Ovary (tissue), 10 donors: ENCODE measurements at regions of chr6 and their contacts with region 1.

Region 1: GRCh38 chr6:45714741-45715507 is 300.7 kb downstream of the CLIC5 start:
- DNase-seq: peak in 4 of 5 donors; percentile 31 to 54 (median 36)
- H3K4me3 ChIP-seq: no peak overlapping the region
- H3K27ac ChIP-seq: no peak overlapping the region
- H3K4me1 ChIP-seq: no peaks in the 10 kb centered on the region
- H3K27me3 ChIP-seq: no peaks in the 10 kb centered on the region
- CTCF ChIP-seq: peak; percentile 50 to 75 (median 67)
- EP300 ChIP-seq: no peak
- POLR2A ChIP-seq: no peak

Region 2: DNA sequence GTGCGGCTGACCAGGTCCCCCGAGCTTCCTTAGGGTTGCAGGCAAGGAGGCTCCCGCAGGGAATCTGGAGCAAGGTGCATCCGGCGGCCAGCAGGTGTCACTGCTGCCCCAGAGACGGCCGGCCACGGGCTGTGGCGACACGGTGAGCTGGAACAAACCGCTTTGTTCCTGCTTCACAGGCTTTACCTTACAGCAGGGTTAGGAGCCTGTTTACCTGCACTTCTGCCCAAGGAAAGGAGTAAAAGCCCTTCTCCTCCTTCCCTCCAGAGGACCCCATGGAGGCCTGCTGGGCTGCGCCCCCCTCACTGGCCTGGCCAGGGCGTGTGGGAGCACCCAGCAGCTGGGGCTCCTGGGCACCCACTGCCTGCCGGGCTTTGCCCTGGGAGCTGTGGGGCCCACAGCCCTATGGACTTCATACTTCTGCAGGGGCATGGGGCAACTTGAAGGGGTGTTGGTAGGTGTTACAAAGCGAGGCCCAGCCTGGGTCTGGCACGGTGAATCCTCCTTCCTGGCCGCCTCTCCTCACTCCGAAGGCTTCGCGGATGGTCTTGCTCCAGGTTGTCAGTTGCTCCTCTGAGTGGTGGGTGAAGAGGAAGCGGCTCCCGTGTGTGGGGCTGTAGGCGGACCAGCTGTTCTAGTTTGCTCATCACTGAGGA is 1239.0 kb before region 1 on chr6:
- intact Hi-C with region 1: loop called in 3 of 4 experiments (anchors 2 to 10 kb)
- DNase-seq: peak; percentile 73 to 88 (median 81)
- H3K4me3 ChIP-seq: no peak overlapping the region
- H3K27ac ChIP-seq: no peak overlapping the region
- H3K4me1 ChIP-seq: peaks cover 9% of the 10 kb centered on the region
- H3K27me3 ChIP-seq: no peaks in the 10 kb centered on the region
- CTCF ChIP-seq: peak; percentile 86 to 92 (median 86)
- EP300 ChIP-seq: no peak
- POLR2A ChIP-seq: no peak

Region 3: DNA sequence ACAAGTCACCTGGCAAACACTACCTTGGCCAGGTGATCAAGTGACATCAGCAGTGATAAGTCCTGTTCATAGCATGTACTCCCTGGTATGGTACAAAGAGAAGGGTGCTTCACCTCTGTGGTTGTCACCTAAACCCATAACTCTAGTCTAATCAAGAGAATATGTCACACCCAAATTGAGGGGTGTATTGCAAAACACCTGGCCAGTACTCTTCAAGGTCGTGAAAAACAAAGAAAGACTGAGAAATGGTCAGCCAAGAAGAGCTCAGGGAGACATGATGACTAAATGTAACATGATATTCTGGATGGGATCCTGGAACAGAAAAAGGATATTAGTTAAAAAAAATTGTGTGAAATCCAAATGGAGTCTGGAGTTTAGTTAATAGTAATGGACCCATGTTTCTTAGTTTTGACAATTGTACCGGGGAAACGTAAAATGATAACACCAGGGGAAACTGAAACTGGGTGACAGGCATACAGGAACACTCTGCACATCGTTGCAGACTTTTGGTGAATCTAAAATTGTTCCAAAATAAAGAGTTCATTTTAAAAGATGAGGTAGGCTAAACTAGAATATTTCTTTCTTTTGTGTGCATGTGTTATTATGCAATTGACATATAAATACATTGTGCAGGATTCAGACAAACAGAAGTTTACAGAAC is 1065.4 kb before region 1 on chr6:
- intact Hi-C with region 1: loop called in 3 of 4 experiments (anchors 5 to 10 kb)
- DNase-seq: no peak
- H3K4me3 ChIP-seq: no peak overlapping the region
- H3K27ac ChIP-seq: no peak overlapping the region
- H3K4me1 ChIP-seq: no peaks in the 10 kb centered on the region
- H3K27me3 ChIP-seq: no peaks in the 10 kb centered on the region
- CTCF ChIP-seq: no peak
- EP300 ChIP-seq: no peak
- POLR2A ChIP-seq: no peak

Region 4: DNA sequence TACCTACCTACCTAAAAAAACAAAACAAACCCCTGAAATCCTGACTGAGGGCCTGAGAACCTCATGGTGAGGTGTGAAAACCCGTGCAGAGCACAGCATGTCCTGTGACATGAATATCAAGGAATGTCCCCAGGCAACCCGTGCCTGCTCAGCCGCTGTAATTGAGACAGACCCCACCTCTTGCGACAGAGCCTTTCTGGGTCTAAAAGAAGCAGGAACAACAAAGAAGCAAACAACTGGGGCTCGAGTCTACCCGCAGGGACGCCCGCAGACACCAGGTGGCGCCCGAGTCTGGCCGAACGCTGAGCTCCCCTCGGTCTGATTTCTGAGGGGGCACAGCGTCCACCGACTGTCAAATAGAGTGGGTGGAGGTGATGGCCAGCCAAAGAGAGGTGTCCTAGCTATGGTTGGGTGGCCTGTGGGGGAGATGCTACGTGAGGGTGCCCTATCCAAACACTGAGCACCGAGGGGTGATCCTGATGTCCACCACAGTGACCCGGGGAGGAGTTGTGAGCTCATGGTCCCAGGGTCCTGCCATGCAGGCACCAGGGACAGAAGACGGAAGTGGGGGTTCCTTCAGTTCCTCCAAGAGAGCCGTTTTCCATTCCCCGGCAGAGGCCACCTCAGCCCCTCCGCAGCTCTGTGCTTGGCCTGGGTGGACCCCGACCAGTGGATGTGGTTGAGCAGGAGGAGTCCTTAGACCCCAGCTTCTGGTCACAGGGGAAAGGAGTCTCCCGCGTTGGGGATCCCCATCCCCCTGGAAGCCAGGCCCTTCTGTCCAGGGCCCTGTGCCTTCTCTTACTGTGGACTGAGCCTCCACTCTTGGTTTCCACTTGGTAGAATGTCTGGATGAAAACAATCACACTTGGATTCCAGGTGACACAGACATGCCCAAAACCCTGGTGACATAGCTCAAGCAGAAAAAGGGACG is 1059.2 kb before region 1 on chr6:
- intact Hi-C with region 1: loop called (anchors 5 to 10 kb)
- DNase-seq: peak; percentile 58 to 81 (median 71)
- H3K4me3 ChIP-seq: no peak overlapping the region
- H3K27ac ChIP-seq: no peak overlapping the region
- H3K4me1 ChIP-seq: no peaks in the 10 kb centered on the region
- H3K27me3 ChIP-seq: no peaks in the 10 kb centered on the region
- CTCF ChIP-seq: peak; percentile 52 to 77 (median 72)
- EP300 ChIP-seq: no peak
- POLR2A ChIP-seq: no peak

Region 5: DNA sequence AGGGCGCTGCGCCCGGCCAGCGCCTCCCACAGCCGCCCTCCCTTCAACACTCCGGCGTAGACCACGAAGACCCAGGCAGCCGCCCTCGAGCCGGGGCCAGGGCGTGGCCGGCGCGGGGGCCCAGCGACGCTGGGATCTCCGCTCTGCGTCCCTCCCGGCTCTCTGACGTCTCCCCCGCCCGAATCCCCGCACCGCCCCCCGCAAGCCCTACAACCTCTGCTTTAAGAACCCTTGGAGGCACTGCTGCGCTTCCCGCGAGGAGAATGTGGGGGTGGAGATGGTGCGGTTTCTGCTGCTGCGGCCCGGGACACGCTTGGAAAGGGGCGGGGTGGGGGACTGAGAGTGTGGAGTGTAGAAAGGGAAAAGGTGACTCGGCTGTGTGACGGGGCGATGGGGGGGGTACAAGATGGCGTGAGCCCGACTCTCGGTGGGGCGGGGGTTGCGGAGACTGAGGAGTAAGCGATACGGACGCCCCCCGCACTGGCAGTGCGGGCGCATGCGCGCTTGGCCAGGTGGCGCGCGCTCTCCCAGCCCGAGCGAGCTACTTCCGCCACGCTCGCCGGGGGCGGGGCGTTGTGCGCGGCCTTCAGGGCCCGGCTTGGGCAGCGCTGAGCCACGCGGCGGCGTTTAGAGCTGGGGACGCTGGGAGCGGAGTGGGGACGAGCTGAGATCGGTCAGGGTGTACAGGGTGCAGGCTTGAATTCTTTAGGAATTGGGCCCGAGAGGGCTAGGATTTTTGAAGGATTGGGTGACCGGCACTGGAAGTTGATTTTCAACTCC is 337.2 kb before region 1 on chr6 and contains the start of gene SUPT3H:
- intact Hi-C with region 1: loop called in 1 of 4 experiments (anchors 5 kb)
- DNase-seq: peak; percentile 91 to 95 (median 92)
- H3K4me3 ChIP-seq: peak within 1 kb of the TSS; percentile 67
- H3K27ac ChIP-seq: peak within 1 kb of the TSS; percentile 86 to 97
- H3K4me1 ChIP-seq: no peaks in the 10 kb centered on the region
- H3K27me3 ChIP-seq: no peaks in the 10 kb centered on the region
- CTCF ChIP-seq: peak; percentile 13 to 21 (median 19)
- EP300 ChIP-seq: no peak
- POLR2A ChIP-seq: peak; percentile 69
- total RNA-seq, gene SUPT3H: 10.3 to 23.1 (median 16.4) TPM

Region 6: DNA sequence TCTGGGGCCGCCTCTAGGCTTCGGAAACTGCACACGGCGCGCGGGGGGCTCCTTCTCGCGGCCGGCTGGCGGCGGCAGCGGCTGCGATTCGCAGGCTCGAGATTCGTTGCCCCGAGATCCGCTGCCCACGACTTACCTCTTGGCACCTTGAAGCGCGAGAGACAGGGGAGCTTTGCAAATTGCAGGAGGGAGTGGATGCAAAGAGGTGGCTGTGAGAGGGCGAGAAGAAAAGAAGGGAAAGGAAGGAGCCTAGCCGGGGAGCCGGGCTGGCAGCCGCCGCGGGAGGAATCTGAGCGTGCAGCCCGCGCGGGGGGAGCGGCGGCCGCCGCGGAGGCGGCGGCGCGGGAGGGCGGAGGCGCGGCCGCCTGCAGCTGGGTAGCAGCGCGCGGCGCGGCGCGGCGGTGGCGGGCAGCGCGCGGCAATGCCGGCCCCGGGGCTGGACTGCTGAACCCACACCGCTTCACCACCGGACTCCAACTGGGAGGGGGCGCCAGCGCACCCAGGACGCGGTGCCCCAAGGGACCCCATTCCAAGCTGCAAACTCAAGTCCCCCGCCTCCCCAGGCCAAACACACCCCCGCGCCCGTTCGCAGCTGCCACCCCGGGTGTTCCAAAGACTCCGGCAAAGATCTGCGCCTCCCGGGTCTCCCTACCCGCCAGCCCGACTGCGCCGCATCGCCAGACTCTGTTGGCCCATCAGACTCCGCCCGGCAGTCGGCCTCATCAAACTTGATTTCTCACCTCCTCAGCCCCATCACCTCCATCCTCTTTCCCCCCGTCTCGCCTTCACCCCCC is 293.0 kb before region 1 on chr6:
- intact Hi-C with region 1: loop called in 1 of 4 experiments (anchors 10 kb)
- DNase-seq: peak; percentile 39 to 73 (median 60)
- H3K4me3 ChIP-seq: peak overlapping the region; percentile 46
- H3K27ac ChIP-seq: peak overlapping the region in 1 of 2 donors; percentile 33
- H3K4me1 ChIP-seq: peaks cover 3% of the 10 kb centered on the region
- H3K27me3 ChIP-seq: no peaks in the 10 kb centered on the region
- CTCF ChIP-seq: no peak
- EP300 ChIP-seq: no peak
- POLR2A ChIP-seq: no peak

Region 7: GRCh38 chr6:45606831-45607400 is 108.0 kb before region 1 on chr6:
- intact Hi-C with region 1: no loop called
- DNase-seq: no peak
- H3K4me3 ChIP-seq: no peak overlapping the region
- H3K27ac ChIP-seq: no peak overlapping the region
- H3K4me1 ChIP-seq: no peaks in the 10 kb centered on the region
- H3K27me3 ChIP-seq: no peaks in the 10 kb centered on the region
- CTCF ChIP-seq: no peak
- EP300 ChIP-seq: no peak
- POLR2A ChIP-seq: no peak